ENCODE measurements at regions of chr18 and their contacts with region 1.

Region 1: DNA sequence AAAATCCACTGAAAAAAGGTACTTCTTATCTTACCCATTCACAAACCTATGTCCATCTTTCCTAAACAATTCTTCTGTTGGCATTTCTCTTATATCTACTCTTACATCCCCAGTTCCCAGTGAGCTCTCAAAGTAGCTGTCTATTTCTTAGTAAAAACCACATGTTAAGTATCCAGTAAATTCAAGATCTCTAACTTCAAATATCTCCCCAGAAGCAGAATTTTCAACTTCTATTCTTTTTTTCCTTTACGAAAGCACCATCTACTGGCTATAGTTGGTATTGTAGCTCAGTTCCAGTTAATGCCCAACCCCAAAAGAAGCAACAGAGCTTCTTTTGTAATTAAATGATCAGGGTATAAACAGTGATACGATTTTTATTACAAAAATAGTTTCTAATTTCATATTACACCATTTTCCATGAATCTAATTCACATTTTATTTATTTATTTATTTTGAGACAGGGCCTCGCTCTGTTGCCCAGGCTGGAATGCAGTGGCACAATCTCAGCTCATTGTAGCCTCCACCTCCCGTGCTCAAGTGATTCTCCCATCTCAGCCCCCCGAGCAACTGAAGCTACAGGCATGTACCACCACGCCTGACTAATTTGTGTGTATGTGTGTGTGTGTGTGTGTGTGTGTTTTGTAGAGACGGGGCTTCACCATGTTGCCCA is 28.5 kb downstream of the HRH4 start:
- DNase-seq: no peak
- H3K4me3 Mint-ChIP-seq: no peak overlapping the region
- H3K27ac Mint-ChIP-seq: no peak overlapping the region
- H3K4me1 Mint-ChIP-seq: peaks cover 15% of the 10 kb centered on the region
- H3K27me3 Mint-ChIP-seq: peaks cover 23% of the 10 kb centered on the region

Region 2: DNA sequence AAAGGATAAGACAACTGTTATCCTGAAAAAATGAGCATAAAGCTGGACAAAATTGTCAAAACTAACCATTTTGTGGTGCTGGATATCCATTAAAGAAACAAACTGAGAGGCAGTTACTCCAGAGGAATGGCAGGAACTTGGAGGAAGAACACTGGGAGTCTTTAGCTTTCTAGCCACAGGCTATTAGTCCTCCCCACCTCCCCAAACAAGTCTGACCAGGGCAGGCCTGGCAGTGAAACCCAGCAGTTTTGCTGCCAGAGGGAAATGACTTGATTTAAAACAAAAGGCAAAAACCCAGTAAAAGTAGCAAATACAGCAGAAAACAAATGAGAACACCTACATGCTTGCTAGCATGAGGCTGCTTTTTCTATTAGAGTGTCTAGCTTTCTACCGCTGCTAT is 126.2 kb before region 1 on chr18:
- CTCF ChIA-PET with region 1: interaction called, 171 read pairs
- POLR2A ChIA-PET with region 1: interaction called, 5 read pairs
- DNase-seq: no peak
- H3K4me3 Mint-ChIP-seq: no peak overlapping the region
- H3K27ac Mint-ChIP-seq: no peak overlapping the region
- H3K4me1 Mint-ChIP-seq: no peaks in the 10 kb centered on the region
- H3K27me3 Mint-ChIP-seq: no peaks in the 10 kb centered on the region

Region 3: DNA sequence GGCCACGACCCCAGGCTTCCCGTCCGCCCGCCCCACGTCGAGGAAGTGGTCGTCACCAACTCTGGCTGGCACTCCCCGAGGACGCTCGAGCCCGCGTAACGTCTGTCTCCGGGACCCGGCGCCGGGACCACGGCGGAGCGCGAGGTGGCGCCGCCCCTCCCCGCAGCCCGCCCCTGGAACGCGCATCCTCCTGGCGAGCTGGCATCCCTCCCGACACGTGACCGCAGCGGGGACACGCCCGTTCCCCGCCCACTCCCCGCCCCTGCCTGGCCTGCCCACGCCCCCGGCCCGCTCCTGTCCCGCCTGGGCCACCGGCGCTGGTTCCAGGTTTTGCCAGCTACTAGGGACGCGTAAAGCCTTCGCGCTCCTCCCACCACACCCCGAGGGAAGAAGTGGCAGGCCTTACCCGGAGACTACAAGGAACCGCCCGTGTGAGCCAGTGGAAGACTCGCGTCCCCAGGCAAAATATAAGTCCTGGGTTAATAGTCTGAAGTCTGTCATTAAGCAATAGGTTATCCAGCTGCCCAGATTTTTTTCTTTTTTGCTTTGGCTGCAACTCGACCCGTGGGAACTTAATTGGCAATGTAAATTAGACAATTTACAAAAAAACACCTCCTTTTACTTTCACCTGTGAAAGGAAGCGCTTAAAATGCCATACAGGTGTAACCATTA is 91.1 kb before region 1 on chr18 and contains the start of gene OSBPL1A:
- CTCF ChIA-PET with region 1: interaction called, 15 read pairs
- POLR2A ChIA-PET with region 1: no interaction called
- DNase-seq: peak; percentile 82
- H3K4me3 Mint-ChIP-seq: peak within 1 kb of the TSS; percentile 74
- H3K27ac Mint-ChIP-seq: no peak within 1 kb of the TSS
- H3K4me1 Mint-ChIP-seq: peaks cover 17% of the 10 kb centered on the region
- H3K27me3 Mint-ChIP-seq: peaks cover 42% of the 10 kb centered on the region
- total RNA-seq, gene OSBPL1A: 0.53 to 0.93 TPM

Region 4: DNA sequence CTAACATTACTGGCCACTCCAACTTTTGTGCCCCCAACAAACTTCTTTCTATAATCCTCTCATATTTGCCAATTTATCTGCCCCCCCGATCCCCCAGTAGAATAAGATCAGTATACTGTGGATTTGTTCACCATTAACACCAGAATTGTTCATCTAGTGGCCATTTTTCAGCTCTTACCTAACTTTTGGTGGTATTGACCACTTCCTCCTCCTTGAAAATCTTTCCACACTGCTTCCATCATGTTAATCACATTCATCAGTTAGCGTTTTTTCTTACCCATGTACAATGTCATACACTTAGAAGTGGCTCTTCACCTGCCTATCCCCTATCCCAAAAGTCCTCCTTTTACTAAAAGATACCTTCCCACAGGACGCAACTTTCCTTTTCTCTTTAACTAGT is 56.3 kb before region 1 on chr18:
- CTCF ChIA-PET with region 1: interaction called, 38 read pairs
- POLR2A ChIA-PET with region 1: no interaction called
- DNase-seq: no peak
- H3K4me3 Mint-ChIP-seq: no peak overlapping the region
- H3K27ac Mint-ChIP-seq: no peak overlapping the region
- H3K4me1 Mint-ChIP-seq: peaks cover 17% of the 10 kb centered on the region
- H3K27me3 Mint-ChIP-seq: no peaks in the 10 kb centered on the region

Region 5: DNA sequence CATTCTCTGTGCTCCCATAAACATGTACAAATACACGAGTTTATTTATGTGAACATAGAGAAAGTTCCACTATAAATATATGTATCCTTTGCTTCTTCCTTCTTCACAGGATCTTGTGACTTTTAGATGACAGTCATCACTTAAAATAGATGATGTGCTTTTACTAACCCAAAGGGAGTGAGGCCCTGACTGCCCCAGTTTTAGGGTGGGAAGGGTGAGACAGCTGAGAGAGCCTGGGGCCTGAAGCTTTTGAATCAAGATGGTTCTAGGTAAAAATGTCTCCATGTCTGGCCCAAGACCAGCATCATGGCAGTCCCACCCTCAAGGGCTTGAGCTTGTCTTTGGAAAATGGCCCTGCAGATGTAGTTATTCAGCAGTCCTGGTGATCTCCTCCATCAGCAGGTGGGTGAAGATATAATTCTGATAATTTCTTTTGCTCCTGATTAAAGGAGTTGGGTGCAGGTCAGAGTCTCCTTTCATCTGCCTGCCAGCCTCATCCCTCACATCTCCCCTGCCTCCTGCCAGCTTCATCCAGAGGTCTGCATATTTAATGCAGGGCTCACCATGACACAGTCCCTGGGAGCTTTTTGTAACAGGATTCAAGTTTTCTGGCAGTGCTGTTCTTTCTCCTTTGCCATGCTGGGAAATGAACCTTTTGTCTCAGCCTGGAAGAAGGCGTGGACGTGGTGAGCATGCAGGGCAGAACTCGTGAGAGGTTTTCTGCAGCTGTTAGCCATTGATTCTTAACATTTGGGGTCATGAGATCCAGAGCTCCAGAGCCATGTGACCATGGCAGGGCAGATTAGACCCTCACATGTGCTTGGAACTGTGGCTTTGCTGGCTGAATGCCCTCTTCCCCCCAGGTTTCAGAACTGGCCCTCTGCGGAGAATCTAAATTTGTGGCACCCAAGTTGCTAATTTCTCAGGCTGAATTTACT is 25.9 kb before region 1 on chr18:
- CTCF ChIA-PET with region 1: interaction called, 35 read pairs
- POLR2A ChIA-PET with region 1: no interaction called
- DNase-seq: no peak
- H3K4me3 Mint-ChIP-seq: no peak overlapping the region
- H3K27ac Mint-ChIP-seq: no peak overlapping the region
- H3K4me1 Mint-ChIP-seq: peaks cover 36% of the 10 kb centered on the region
- H3K27me3 Mint-ChIP-seq: peaks cover 7% of the 10 kb centered on the region

Region 6: DNA sequence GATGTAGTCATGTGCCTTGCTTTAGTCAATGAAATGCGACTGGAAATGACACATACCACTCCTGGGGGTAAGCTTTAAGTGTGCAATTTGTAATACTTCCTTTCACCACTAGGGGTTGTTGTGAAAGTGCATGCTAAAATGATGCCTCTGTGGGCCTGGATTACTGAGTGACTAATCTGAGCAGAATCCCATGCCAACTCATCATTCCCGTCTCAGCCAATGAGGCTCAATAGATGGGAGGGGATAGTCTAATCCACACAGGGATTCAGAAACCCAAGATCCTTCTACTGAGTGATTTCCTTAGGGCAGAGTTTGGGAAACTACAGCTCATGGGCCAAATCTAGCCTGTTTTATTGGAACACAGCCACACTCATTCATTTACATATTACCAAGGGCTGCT is 25.5 kb after region 1 on chr18:
- CTCF ChIA-PET with region 1: interaction called, 10 read pairs
- POLR2A ChIA-PET with region 1: no interaction called
- DNase-seq: no peak
- H3K4me3 Mint-ChIP-seq: no peak overlapping the region
- H3K27ac Mint-ChIP-seq: no peak overlapping the region
- H3K4me1 Mint-ChIP-seq: no peaks in the 10 kb centered on the region
- H3K27me3 Mint-ChIP-seq: peaks cover 4% of the 10 kb centered on the region